Activated CD4-positive, alpha-beta T cell treated with anti-CD3 and anti-CD28 coated beads, Interleukin-2, amount 10 ng/mL, durations not matched to agents 24 days and 14 days (primary cell): ENCODE measurements at regions of chr2 and their contacts with region 1.

Region 1: DNA sequence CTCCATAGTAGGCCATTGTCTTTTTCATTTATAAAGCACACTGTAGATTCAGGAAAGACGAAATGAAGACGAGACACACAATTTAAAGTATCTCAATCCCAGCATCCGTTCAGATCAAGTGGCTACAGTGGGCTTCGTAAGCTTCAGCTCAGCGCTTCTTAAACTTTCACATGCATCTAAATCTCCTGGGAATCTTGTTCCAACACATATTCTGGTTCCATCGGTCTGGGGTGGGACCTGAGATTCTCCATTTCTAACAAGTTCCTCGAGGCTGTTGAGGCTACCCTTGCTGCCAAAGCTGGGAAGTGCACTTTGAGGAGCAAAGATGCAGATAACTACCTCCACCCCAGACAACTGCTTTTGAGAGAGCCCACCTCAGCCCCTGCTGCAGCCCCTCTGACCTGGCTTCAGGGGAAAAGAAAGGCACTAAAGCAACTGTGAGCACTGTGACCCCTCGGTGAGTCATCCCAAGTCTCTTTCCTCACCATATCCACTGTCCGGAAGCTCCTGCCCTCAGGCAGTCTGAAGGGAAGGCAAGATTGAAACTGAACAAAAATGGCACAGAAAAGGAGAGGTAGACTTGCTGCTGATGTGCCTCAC is 201.1 kb upstream of the FBXO11 start:
- DNase-seq: no peak
- H3K4me3 Mint-ChIP-seq: no peak overlapping the region
- H3K27ac Mint-ChIP-seq: no peak overlapping the region
- H3K4me1 Mint-ChIP-seq: peaks cover 19% of the 10 kb centered on the region
- H3K27me3 Mint-ChIP-seq: peaks cover 12% of the 10 kb centered on the region

Region 2: DNA sequence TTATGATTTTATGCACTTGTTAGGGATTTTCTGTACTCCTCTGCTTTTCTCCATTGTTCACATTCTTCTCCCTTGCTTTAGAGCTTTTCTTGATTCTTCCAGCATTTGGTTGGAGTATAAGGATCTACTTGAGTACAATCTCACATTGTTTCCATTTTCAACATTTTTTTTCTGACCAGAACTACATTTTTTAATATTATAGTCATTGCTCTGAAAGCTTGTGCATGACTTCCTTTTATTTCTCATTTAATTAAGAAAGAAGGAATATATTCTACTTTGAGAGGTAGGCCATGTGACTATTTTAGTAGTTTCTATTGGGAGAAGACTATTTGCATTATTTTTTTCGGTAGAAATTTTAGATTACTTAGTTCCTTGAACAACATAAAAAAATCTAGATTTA is 1427.7 kb before region 1 on chr2:
- intact Hi-C with region 1: loop called (anchors 5 kb)
- DNase-seq: no peak
- H3K4me3 Mint-ChIP-seq: no peak overlapping the region
- H3K27ac Mint-ChIP-seq: no peak overlapping the region
- H3K4me1 Mint-ChIP-seq: peaks cover 2% of the 10 kb centered on the region
- H3K27me3 Mint-ChIP-seq: peaks cover 20% of the 10 kb centered on the region